Caco-2 (cell line): ENCODE measurements at regions of chr12 and their contacts with region 1.

Region 1: DNA sequence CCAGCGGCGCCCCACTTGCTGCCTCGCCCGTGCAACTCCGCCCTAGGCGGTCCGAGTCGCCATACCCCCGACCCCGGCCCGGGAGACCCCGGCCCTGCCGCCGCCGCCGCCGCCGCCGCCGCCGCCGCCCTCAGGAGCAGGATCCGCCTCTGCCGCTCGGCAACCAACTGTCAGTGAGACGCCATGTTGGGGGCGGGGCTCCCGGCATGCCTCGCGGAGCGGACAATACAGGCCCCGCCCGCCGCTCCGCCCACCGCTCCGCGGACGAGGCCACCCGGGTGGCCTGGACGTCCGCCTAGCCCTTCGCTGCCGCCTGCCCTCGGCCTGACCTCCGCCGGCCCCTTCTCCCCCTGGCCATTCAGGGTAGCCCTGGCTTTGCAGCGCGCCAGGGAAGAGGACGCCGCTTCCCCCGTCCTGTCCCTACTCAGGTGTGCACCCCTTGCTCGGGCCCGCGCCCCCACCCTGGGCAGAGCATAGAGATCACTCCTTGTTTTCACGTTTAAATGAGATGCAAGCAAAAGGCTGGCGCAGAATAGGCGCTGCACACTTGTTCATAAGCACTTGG is at the start of gene HECTD4:
- DNase-seq: peak; percentile 90 to 97
- H3K4me3 ChIP-seq: peak within 1 kb of the TSS; percentile 86
- H3K4me3 Mint-ChIP-seq: peak within 1 kb of the TSS; percentile 86
- H3K27ac Mint-ChIP-seq: peak within 1 kb of the TSS; percentile 88
- H3K4me1 ChIP-seq: peaks cover 8% of the 10 kb centered on the region; the same call in 1 of the 2 replicates
- H3K4me1 Mint-ChIP-seq: peaks cover 11% of the 10 kb centered on the region
- H3K27me3 ChIP-seq: no peaks in the 10 kb centered on the region
- H3K27me3 Mint-ChIP-seq: no peaks in the 10 kb centered on the region
- CTCF ChIP-seq: no peak
- total RNA-seq, gene HECTD4: 54.5 and 60.9 TPM in 2 replicates

Region 2: DNA sequence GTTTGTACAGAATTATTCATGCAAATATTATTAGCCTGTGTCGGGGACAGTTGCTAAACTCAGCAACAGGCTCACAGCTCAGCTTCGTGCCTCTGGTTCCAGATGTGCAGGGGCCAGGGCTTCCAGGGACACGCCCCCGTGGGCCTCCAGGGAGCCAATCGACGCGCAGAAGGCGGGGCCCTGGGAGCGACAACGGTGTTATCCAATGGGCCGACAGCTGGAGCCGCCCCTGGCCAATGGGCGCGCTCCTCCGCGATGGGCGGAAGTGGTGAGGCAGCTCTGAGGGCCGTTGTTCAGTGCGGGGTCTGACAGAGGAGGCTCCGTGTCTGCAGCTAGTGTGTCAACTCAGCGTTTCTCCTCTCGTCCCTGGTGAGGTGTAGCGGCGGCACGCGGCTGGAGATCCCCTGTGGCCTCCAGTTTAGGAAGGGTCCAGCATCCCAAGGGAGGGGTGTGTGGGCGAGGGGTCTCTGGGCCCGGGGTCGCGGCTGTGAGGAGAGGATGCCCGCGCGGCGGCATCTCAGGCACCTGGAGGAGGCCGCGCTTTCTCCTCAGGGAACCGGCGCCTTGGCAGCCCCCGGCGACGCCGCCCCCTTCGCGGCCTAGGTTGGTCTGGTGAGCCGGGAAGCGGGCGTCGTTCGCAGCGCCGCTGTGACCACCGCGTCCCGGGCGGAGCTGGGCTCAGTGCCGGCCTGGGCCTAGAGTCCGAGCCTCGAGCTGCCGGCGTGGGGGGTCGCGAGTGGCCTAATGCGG is 256.9 kb before region 1 on chr12 and contains the start of gene TRAFD1:
- CTCF ChIA-PET with region 1: no interaction called
- POLR2A ChIA-PET with region 1: no interaction called
- intact Hi-C with region 1: loop called (anchors 10 kb)
- DNase-seq: peak; percentile 96 to 99
- H3K4me3 ChIP-seq: peak within 1 kb of the TSS; percentile 94
- H3K4me3 Mint-ChIP-seq: peak within 1 kb of the TSS; percentile 78
- H3K27ac Mint-ChIP-seq: peak within 1 kb of the TSS; percentile 42
- H3K4me1 ChIP-seq: peaks cover 10% of the 10 kb centered on the region; the same call in 1 of the 2 replicates
- H3K4me1 Mint-ChIP-seq: peaks cover 21% of the 10 kb centered on the region
- H3K27me3 ChIP-seq: no peaks in the 10 kb centered on the region
- H3K27me3 Mint-ChIP-seq: no peaks in the 10 kb centered on the region
- CTCF ChIP-seq: no peak
- total RNA-seq, gene TRAFD1: 25.5 and 26.5 TPM in 2 replicates

Region 3: GRCh38 chr12:112198120-112198733 is 184.1 kb before region 1 on chr12:
- CTCF ChIA-PET with region 1: interaction called, 71 read pairs
- POLR2A ChIA-PET with region 1: no interaction called
- intact Hi-C with region 1: loop called (anchors 1 kb)
- DNase-seq: peak; percentile 75 to 77
- H3K4me3 ChIP-seq: no peak overlapping the region
- H3K4me3 Mint-ChIP-seq: no peak overlapping the region
- H3K27ac Mint-ChIP-seq: no peak overlapping the region
- H3K4me1 ChIP-seq: no peaks in the 10 kb centered on the region
- H3K4me1 Mint-ChIP-seq: no peaks in the 10 kb centered on the region
- H3K27me3 ChIP-seq: no peaks in the 10 kb centered on the region
- H3K27me3 Mint-ChIP-seq: no peaks in the 10 kb centered on the region
- CTCF ChIP-seq: peak; percentile 62 to 78

Region 4: GRCh38 chr12:112270673-112271072 is 111.6 kb before region 1 on chr12:
- CTCF ChIA-PET with region 1: no interaction called
- POLR2A ChIA-PET with region 1: no interaction called
- intact Hi-C with region 1: no loop called
- DNase-seq: no peak
- H3K4me3 ChIP-seq: no peak overlapping the region
- H3K4me3 Mint-ChIP-seq: no peak overlapping the region
- H3K27ac Mint-ChIP-seq: no peak overlapping the region
- H3K4me1 ChIP-seq: no peaks in the 10 kb centered on the region
- H3K4me1 Mint-ChIP-seq: no peaks in the 10 kb centered on the region
- H3K27me3 ChIP-seq: no peaks in the 10 kb centered on the region
- H3K27me3 Mint-ChIP-seq: no peaks in the 10 kb centered on the region
- CTCF ChIP-seq: no peak

Region 5: GRCh38 chr12:112294793-112295192 is 87.5 kb before region 1 on chr12:
- CTCF ChIA-PET with region 1: no interaction called
- POLR2A ChIA-PET with region 1: no interaction called
- intact Hi-C with region 1: loop called (anchors 10 kb)
- DNase-seq: peak in 1 of 2 experiments; percentile 22
- H3K4me3 ChIP-seq: no peak overlapping the region
- H3K4me3 Mint-ChIP-seq: no peak overlapping the region
- H3K27ac Mint-ChIP-seq: no peak overlapping the region
- H3K4me1 ChIP-seq: no peaks in the 10 kb centered on the region
- H3K4me1 Mint-ChIP-seq: no peaks in the 10 kb centered on the region
- H3K27me3 ChIP-seq: no peaks in the 10 kb centered on the region
- H3K27me3 Mint-ChIP-seq: no peaks in the 10 kb centered on the region
- CTCF ChIP-seq: no peak